MCF 10A (cell line): ENCODE measurements at regions of chr5 and their contacts with region 1.

Region 1: DNA sequence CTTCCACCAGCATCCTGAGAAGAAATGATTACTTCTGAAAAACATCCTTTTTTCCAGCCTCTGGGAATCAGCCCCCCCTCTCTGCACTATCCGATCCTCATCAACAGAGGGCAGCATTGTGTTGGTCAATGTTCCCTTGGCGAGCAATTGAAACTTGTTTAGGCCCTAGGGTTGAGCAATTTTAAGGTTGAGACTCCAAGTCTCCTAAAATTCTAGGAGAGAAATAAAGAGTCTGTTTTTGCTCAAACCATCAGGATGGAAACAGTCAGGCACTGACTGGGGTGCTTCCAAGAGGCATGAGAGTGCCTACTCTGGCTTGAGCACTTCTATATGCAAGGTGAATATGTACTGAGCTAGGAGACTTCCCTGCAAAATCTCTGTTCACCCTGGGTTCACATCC is 12.4 kb upstream of the CYFIP2 start:
- DNase-seq: peak; percentile 79
- H3K4me3 Mint-ChIP-seq: no peak overlapping the region
- H3K27ac Mint-ChIP-seq: no peak overlapping the region
- H3K4me1 Mint-ChIP-seq: no peaks in the 10 kb centered on the region
- H3K27me3 Mint-ChIP-seq: no peaks in the 10 kb centered on the region
- CTCF ChIP-seq: peak; percentile 96

Region 2: DNA sequence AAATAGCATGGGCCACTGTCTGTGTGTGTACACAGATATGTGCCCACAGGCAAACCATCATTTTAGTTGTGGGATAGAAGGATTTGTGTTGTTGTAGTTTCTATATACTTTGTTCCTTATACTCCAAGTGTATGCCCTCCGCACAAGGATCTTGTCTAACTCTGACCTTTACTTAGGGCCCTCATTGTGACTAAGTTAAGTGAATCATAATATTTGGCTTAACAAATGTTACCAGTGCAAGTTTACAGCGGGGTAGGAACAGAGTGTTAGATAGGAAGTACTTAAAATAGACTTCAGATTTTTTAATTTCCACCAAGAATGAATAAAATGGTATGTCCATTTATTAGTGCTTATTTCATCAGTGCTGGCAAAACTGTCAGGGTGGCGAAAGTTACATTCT is 17.1 kb before region 1 on chr5:
- CTCF ChIA-PET with region 1: interaction called, 40 read pairs
- POLR2A ChIA-PET with region 1: interaction called, 4 read pairs
- intact Hi-C with region 1: no loop called
- DNase-seq: no peak
- H3K4me3 Mint-ChIP-seq: no peak overlapping the region
- H3K27ac Mint-ChIP-seq: no peak overlapping the region
- H3K4me1 Mint-ChIP-seq: no peaks in the 10 kb centered on the region
- H3K27me3 Mint-ChIP-seq: no peaks in the 10 kb centered on the region
- CTCF ChIP-seq: no peak

Region 3: DNA sequence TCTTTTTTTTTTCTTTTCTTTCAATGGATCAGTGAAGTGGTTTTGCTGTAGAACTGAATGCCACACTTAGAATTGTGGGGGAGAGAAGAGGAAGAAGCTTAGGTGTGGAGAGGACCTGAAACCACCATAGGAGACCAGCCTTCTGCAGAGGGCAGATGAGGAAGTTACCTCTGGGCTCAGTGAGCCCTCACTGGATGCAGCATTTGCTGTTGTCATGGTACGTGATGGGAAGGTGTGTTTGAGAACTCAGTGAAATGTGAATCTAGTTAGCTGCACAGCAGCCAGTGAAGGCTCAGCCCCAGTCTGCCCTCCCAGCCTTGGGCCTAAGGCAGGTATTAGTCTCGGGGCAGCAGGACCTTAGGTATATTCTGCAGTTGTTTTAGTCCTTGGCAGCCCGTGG is 29.9 kb after region 1 on chr5:
- CTCF ChIA-PET with region 1: interaction called, 31 read pairs
- POLR2A ChIA-PET with region 1: interaction called, 3 read pairs
- intact Hi-C with region 1: no loop called
- DNase-seq: no peak
- H3K4me3 Mint-ChIP-seq: no peak overlapping the region
- H3K27ac Mint-ChIP-seq: no peak overlapping the region
- H3K4me1 Mint-ChIP-seq: peaks cover 19% of the 10 kb centered on the region
- H3K27me3 Mint-ChIP-seq: no peaks in the 10 kb centered on the region
- CTCF ChIP-seq: no peak

Region 4: DNA sequence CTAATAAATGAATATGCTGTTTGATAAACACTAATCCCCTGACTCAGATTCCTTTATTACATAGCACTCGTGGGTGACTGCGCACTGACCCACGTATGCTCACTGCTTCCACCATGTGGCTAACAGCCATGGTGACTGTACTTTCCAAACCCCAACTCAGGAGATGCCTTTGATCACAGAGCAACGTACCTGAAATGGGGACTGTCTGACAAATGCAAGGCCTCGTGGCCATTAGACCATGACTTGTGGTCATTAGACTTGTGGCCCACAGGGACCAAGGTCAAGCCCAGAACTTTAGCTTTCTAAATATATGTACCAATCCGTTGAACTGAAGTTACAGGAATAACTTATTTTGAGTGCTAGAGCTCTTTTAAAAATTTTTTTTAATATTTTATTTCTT is 58.9 kb after region 1 on chr5:
- CTCF ChIA-PET with region 1: interaction called, 249 read pairs
- POLR2A ChIA-PET with region 1: interaction called, 4 read pairs
- intact Hi-C with region 1: loop called (anchors 1 kb)
- DNase-seq: peak; percentile 67
- H3K4me3 Mint-ChIP-seq: no peak overlapping the region
- H3K27ac Mint-ChIP-seq: no peak overlapping the region
- H3K4me1 Mint-ChIP-seq: no peaks in the 10 kb centered on the region
- H3K27me3 Mint-ChIP-seq: no peaks in the 10 kb centered on the region
- CTCF ChIP-seq: peak; percentile 82

Region 5: GRCh38 chr5:157431544-157432200 is 178.1 kb after region 1 on chr5:
- CTCF ChIA-PET with region 1: interaction called, 10 read pairs
- POLR2A ChIA-PET with region 1: no interaction called
- intact Hi-C with region 1: loop called (anchors 2 kb)
- DNase-seq: peak; percentile 82
- H3K4me3 Mint-ChIP-seq: no peak overlapping the region
- H3K27ac Mint-ChIP-seq: no peak overlapping the region
- H3K4me1 Mint-ChIP-seq: no peaks in the 10 kb centered on the region
- H3K27me3 Mint-ChIP-seq: no peaks in the 10 kb centered on the region
- CTCF ChIP-seq: peak; percentile 69

Region 6: DNA sequence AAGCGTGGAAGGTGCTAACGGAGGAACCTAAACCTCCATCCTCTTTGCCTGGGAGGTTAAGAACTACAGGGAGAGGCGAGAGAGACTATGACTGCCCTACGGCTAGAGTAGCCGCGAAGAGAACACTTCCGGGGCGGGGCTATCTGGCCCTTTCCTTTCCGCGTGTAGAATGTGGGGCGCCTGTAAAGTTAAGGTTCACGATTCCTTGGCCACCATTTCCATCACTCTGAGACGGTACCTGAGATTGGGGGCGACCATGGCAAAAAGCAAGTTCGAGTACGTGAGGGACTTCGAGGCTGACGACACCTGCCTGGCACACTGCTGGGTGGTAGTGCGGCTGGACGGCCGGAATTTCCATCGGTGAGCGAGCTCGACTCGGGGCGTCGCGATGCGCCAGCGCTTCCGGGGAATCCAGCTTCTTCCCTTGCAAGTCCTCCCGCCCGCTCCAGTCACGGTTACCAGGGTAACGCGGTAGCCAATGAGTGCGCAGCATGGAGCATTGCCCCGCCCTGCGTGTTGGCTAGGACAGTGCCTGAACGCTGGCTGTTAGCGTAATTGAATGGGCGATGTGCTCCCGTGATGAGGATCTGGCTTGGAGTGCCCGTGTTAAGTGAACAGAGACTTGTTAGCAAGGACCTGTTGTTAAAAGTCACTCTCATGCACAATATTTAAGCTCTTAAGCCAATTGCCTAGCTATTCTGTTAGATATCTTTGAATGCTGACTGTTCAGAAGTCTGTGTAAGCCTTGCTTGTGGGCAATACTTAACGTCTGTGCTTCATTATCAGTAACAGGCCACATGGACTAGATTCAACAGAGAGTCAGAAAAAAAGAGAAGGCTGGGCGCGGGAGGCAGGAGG is 478.0 kb after region 1 on chr5 and contains the start of gene THG1L:
- CTCF ChIA-PET with region 1: interaction called, 12 read pairs
- POLR2A ChIA-PET with region 1: no interaction called
- intact Hi-C with region 1: no loop called
- DNase-seq: peak; percentile 100
- H3K4me3 Mint-ChIP-seq: peak within 1 kb of the TSS; percentile 97
- H3K27ac Mint-ChIP-seq: peak within 1 kb of the TSS; percentile 98
- H3K4me1 Mint-ChIP-seq: peaks cover 14% of the 10 kb centered on the region
- H3K27me3 Mint-ChIP-seq: no peaks in the 10 kb centered on the region
- CTCF ChIP-seq: no peak
- total RNA-seq, gene THG1L: 21.1 and 29.9 TPM in 2 replicates

Region 7: DNA sequence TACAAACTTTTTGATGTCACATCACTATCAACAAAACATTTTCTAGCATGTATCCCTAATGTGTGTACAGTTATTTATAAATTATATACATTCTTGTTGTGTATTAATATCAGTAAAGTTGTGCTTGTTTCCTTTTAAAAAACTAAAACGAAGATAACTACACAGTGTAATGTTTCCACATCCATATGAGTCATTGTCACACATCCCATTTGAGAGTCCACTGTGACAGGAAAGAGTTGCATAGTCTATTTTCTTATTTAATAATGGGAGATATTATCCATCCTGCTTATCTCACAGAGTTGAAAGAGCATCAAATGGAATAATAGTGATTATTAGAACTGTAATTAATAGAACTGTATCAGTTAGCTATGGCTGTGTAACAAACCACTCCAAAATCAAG is 1039.4 kb after region 1 on chr5:
- CTCF ChIA-PET with region 1: no interaction called
- POLR2A ChIA-PET with region 1: no interaction called
- intact Hi-C with region 1: no loop called
- DNase-seq: no peak
- H3K4me3 Mint-ChIP-seq: no peak overlapping the region
- H3K27ac Mint-ChIP-seq: no peak overlapping the region
- H3K4me1 Mint-ChIP-seq: peaks cover 5% of the 10 kb centered on the region
- H3K27me3 Mint-ChIP-seq: no peaks in the 10 kb centered on the region
- CTCF ChIP-seq: no peak

Region 8: GRCh38 chr5:158451203-158451992 is 1197.9 kb after region 1 on chr5:
- CTCF ChIA-PET with region 1: no interaction called
- POLR2A ChIA-PET with region 1: no interaction called
- intact Hi-C with region 1: no loop called
- DNase-seq: no peak
- H3K4me3 Mint-ChIP-seq: no peak overlapping the region
- H3K27ac Mint-ChIP-seq: no peak overlapping the region
- H3K4me1 Mint-ChIP-seq: peaks cover 8% of the 10 kb centered on the region
- H3K27me3 Mint-ChIP-seq: no peaks in the 10 kb centered on the region
- CTCF ChIP-seq: no peak